Thyroid gland (tissue), 4 donors: ENCODE measurements at regions of chr1 and their contacts with region 1.

Region 1: DNA sequence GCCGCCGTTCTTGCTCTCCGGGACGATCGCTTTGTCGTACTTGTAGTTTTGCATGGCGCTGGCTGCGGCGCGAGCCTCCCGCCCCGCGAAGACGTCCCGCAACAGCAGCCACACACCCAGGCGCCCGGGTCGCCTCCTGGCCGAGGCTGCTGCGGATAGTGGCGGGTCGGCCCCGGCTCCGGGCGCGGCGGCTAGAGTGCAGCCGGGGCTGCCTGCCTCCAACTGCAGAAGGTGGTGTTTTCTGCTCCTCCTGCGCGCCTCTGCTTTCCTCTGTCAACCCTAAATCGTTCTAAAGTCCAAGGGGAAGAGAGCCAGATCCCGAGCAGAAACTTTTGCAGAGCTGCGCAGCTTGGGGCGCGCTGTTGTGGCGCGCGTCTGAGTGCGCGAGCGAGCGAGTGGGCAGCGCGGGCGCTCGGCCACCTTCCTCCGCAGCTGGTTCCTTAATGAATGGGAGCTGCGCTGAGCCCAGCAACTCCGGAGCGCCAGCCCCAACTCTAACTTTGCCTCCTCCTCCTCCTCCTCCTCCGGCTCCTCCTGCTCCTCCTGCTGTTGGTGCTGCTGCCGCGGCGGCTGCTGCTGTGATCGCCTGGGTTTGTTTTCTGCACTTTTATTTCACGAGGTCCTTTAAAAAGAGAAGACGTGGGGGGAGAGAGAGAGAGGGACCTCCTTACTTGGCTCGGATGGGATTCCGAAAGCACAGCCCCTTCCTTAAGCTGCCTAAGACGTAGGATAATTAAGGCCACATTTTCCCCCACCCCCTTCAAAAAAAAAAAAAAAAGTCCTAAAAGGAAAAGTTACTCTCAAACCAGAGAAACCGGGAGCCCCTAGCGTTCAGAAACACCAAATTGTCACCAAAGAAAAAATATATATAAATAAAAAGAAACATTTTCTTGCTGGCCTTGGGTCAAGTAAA is at the start of gene PLPP3:
- DNase-seq: peak; percentile 88 to 92
- H3K4me3 ChIP-seq: peak within 1 kb of the TSS; percentile 93 to 96 (median 94)
- H3K27ac ChIP-seq: peak within 1 kb of the TSS; percentile 97 to 98 (median 97)
- H3K4me1 ChIP-seq: peaks cover 13 to 28% of the 10 kb centered on the region in 2 donors
- H3K27me3 ChIP-seq: no peaks in the 10 kb centered on the region
- CTCF ChIP-seq: peak in 5 of 6 experiments; percentile 25 to 83 (median 47)
- POLR2A ChIP-seq: peak; percentile 94 to 97
- total RNA-seq, gene PLPP3: 257 to 764 (median 675) TPM

Region 2: DNA sequence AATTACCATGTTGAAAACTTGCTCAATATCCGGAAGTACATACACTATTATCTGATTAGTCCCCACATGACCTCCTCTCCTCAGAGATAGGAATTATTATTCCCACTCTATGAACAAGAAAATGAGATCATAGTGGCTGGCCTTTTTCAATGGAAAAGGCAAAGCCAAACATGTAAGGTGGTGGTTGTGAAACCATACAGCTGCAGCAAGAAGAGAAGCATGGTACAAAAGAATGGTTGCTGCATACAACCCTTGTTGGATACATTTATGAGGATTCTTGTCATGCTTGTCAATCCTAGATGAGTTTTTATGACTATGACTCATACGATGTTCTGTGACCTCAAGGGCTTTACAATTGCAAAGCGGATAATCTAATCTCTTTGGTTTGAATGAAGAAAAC is 514.5 kb before region 1 on chr1:
- intact Hi-C with region 1: loop called (anchors 10 kb)
- DNase-seq: no peak
- H3K4me3 ChIP-seq: no peak overlapping the region
- H3K27ac ChIP-seq: no peak overlapping the region
- H3K4me1 ChIP-seq: peaks cover 22 to 33% of the 10 kb centered on the region in 2 donors
- H3K27me3 ChIP-seq: no peaks in the 10 kb centered on the region
- CTCF ChIP-seq: no peak
- POLR2A ChIP-seq: no peak

Region 3: GRCh38 chr1:56525489-56526041 is 53.7 kb before region 1 on chr1:
- intact Hi-C with region 1: loop called (anchors 10 kb)
- DNase-seq: no peak
- H3K4me3 ChIP-seq: no peak overlapping the region
- H3K27ac ChIP-seq: no peak overlapping the region
- H3K4me1 ChIP-seq: peaks cover 73 to 91% of the 10 kb centered on the region in 2 donors
- H3K27me3 ChIP-seq: no peaks in the 10 kb centered on the region
- CTCF ChIP-seq: no peak
- POLR2A ChIP-seq: no peak